ENCODE measurements at regions of chr15 and their contacts with region 1.

Region 1: GRCh38 chr15:84658080-84658787 is at the start of gene NMB:
- DNase-seq: peak; percentile 78 to 83 (median 82)
- H3K4me3 ChIP-seq: peak within 1 kb of the TSS; percentile 33 to 75 (median 41)
- H3K4me3 Mint-ChIP-seq: peak within 1 kb of the TSS; percentile 83 to 87
- H3K27ac ChIP-seq: no peak within 1 kb of the TSS
- H3K27ac Mint-ChIP-seq: peak within 1 kb of the TSS in 2 of 7 donors; percentile 31 to 76
- H3K4me1 ChIP-seq: peaks cover 28 to 32% of the 10 kb centered on the region in 2 donors
- H3K4me1 Mint-ChIP-seq: peaks cover 37% of the 10 kb centered on the region
- H3K27me3 ChIP-seq: no peaks in the 10 kb centered on the region
- H3K27me3 Mint-ChIP-seq: peaks cover 0 to 8% (median 8%) of the 10 kb centered on the region in 3 donors
- CTCF ChIP-seq: peak; percentile 74
- polyA plus RNA-seq, gene NMB: 0.45 to 0.81 (median 0.56) TPM

Region 2: DNA sequence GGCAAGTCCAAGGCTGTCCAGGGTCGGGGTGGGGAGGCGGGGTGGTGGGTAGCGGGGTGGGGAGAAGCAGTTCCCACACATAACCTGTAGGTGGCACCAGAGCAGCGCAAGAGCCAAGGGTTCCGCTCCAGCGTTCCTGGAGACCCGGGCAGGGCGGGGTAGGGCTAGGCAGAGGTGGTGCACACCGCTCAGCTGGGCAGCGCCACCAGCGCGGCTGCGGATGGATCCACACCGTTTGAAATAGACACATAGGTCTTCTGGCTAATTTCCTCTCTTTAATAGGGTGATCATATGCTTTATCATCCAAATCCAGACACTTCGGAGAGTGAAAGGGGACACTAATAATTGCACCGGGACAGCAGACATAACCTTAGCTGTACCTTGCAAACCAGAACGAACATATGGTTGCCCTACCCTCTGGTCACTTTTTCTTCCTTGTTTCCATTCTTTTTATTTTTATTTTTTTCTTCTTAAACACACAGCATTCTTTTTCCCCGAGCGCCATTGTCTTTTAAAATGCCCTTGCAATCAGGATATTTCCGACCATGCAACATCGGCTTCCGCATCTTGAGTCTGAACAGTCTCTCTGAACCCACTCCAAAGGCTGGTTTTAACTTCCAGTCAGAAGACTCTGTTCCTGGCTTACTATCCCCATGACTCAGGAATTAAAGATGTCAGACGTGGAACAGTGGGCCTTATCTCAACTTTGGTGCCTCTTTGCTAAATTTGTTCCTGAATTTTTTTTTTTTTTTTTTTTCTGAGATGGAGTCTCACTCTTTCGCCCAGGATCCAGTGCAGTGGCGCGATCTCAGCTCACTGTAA is 70.0 kb before region 1 on chr15:
- intact Hi-C with region 1: loop called in 1 of 2 experiments (anchors 5 kb)
- DNase-seq: peak; percentile 79 to 84 (median 81)
- H3K4me3 ChIP-seq: peak overlapping the region in 2 of 3 experiments; percentile 23 to 66
- H3K4me3 Mint-ChIP-seq: peak overlapping the region; percentile 77 to 92
- H3K27ac ChIP-seq: no peak overlapping the region
- H3K27ac Mint-ChIP-seq: peak overlapping the region in 1 of 7 donors; percentile 41
- H3K4me1 ChIP-seq: peaks cover 6 to 8% of the 10 kb centered on the region in 2 donors
- H3K4me1 Mint-ChIP-seq: peaks cover 6% of the 10 kb centered on the region
- H3K27me3 ChIP-seq: no peaks in the 10 kb centered on the region
- H3K27me3 Mint-ChIP-seq: peaks cover 0 to 3% (median 2%) of the 10 kb centered on the region in 3 donors
- CTCF ChIP-seq: peak; percentile 82

Region 3: DNA sequence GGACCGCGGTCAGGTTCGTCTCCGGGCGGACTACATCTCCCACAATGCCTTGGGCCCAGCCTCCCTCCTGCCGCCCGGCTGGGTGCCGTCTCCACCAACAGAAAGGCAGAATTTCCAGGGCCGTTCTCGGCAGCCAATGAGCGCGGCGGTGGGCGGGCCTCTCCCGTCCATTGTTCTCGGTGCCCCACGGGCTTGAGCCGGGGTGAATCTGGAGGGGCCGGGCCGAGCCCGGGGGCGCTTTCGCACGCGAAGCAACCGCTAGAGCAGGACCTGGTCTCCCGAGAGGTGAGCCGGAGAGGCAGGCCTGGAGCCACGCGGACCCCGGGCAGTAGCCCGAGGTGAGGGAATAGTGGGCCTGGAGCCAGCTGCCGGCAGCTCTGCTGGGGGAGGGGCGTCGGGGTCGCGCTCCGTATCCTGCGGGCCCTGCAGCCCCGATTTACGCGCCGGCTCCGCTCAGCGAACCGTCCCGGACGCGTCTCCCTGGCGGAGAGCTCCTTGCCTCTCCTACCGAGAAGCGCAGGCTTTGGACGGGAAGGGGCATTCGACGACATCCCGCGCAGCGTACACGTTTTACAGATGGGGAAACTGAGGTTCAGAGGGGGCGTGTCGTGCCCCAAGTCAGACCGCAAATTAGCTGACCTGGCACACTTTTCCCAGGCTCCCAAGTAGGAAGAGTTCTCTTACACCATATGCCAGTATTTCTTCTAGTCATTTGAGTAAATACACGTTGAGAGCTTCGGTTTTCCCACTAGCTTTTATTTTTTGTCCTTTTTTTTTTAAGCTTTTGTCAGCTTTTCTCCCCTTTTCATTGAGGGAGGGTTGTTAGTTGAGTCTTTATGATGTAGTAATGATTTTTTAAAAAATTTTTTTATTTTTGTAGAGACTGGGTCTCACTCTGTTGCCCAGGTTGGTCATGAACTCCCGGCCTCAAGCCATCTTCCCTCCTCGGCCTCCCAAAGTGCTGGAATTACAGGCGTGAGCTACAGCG is 57.1 kb before region 1 on chr15 and contains the start of gene ZSCAN2:
- intact Hi-C with region 1: loop called in 1 of 2 experiments (anchors 2 kb)
- DNase-seq: peak; percentile 82 to 90 (median 87)
- H3K4me3 ChIP-seq: peak within 1 kb of the TSS; percentile 78 to 95 (median 88)
- H3K4me3 Mint-ChIP-seq: peak within 1 kb of the TSS; percentile 95 to 98
- H3K27ac ChIP-seq: peak within 1 kb of the TSS; percentile 11 to 74
- H3K27ac Mint-ChIP-seq: peak within 1 kb of the TSS; percentile 69 to 95 (median 80)
- H3K4me1 ChIP-seq: peaks cover 42 to 55% of the 10 kb centered on the region in 2 donors
- H3K4me1 Mint-ChIP-seq: peaks cover 65% of the 10 kb centered on the region
- H3K27me3 ChIP-seq: no peaks in the 10 kb centered on the region
- H3K27me3 Mint-ChIP-seq: no peaks in the 10 kb centered on the region
- CTCF ChIP-seq: no peak
- polyA plus RNA-seq, gene ZSCAN2: 1.7 to 6.1 (median 3.4) TPM

Region 4: GRCh38 chr15:84631706-84632272 is 26.4 kb before region 1 on chr15:
- intact Hi-C with region 1: loop called in 1 of 2 experiments (anchors 2 kb)
- DNase-seq: no peak
- H3K4me3 ChIP-seq: peak overlapping the region; percentile 51 to 92 (median 84)
- H3K4me3 Mint-ChIP-seq: peak overlapping the region; percentile 93 to 99
- H3K27ac ChIP-seq: peak overlapping the region; percentile 33 to 83
- H3K27ac Mint-ChIP-seq: peak overlapping the region in 6 of 7 donors; percentile 88 to 98 (median 93)
- H3K4me1 ChIP-seq: peaks cover 30 to 48% of the 10 kb centered on the region in 2 donors
- H3K4me1 Mint-ChIP-seq: peaks cover 40% of the 10 kb centered on the region
- H3K27me3 ChIP-seq: no peaks in the 10 kb centered on the region
- H3K27me3 Mint-ChIP-seq: no peaks in the 10 kb centered on the region
- CTCF ChIP-seq: no peak

Region 5: DNA sequence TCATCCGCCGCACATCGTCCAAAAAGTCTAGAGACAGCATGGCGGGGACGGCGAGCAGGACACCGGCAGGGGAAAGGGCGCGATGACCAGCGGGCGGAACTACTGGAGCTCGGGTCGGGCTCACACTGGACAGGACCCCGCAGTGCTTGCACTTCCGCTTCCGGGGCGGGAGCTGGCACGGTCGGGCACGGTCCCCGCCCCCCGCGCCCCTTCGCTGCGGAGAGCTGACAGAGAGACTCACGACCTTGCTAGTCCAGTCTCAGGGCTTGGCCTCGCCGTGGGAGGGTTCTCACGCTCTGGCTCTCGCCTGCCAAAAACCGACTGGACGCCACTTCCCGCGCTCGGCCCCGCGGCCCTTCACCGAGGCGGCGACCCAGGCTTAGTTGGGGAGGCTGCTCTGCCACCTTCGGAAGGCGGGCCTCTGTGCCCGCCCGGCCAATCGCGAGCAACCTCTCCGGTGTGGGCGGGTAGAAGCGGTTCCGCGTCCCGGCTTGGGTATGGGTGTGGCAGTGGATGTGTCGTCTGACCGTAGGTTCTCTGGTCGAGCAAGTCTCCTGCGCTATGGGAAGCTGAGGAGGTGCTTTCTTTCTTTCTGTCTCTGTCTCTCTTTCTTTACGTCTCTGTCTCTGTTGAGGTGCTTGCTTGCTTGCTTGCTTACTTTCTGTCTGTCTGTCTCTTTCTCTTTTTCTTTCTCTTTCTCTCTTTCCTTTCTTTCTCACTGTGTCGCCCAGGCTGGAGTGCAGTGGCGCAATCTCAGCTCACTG is 58.0 kb after region 1 on chr15 and contains the start of gene SEC11A:
- intact Hi-C with region 1: loop called in 1 of 2 experiments (anchors 10 kb)
- DNase-seq: peak; percentile 92 to 96 (median 93)
- H3K4me3 ChIP-seq: peak within 1 kb of the TSS; percentile 73 to 100 (median 99)
- H3K4me3 Mint-ChIP-seq: peak within 1 kb of the TSS; percentile 98 to 100
- H3K27ac ChIP-seq: peak within 1 kb of the TSS; percentile 93
- H3K27ac Mint-ChIP-seq: peak within 1 kb of the TSS; percentile 86 to 100 (median 99)
- H3K4me1 ChIP-seq: peaks cover 49 to 64% of the 10 kb centered on the region in 2 donors
- H3K4me1 Mint-ChIP-seq: peaks cover 54% of the 10 kb centered on the region
- H3K27me3 ChIP-seq: no peaks in the 10 kb centered on the region
- H3K27me3 Mint-ChIP-seq: peaks cover 0 to 2% (median 0%) of the 10 kb centered on the region in 3 donors
- CTCF ChIP-seq: no peak
- polyA plus RNA-seq, gene SEC11A: 111 to 166 (median 154) TPM

Region 6: DNA sequence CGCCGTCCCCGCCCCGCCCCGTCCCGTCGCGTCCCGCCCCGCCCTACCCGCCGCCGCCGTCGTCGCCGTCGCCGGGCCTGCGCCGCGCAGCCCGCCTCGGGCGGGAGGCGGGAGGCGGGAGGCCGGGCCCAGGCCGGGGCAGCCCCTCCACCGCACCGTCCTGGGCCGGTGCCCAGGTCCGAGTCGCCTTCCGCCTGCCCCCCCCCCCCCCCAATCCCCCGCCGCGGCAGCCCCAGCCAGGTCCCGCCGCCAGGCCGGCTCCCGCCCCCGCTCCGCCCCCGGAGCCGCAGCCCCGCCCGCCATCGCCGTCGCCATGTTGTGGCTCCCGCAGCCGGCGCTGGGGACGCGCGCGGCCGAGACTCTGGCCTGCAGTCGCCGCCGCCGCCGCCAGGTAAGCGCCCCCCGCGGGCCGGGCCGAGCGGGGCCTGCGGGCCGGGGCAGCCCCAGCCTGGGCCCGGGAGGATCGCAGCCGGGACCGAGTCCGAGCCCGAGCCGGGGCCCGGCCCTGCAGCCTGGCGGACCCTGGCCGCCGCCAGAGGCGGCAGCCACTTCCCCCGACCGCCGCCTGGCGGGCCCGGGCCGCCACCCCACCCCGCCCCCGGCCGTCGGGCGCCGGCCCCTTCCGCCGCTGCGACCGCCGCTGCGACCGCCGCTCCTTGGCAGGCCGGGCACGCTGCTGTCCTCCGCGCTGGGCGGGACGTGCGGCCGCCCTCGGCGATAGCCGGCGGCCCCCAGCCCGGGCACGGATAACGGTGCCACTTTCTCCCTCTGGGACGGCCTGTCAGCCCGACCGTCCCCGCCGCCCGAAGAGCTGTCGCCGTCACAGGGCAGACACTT is 90.3 kb after region 1 on chr15 and contains the start of gene ZNF592:
- intact Hi-C with region 1: loop called in 1 of 2 experiments (anchors 5 kb)
- DNase-seq: peak; percentile 59 to 67 (median 63)
- H3K4me3 ChIP-seq: peak within 1 kb of the TSS; percentile 72 to 100 (median 96)
- H3K4me3 Mint-ChIP-seq: peak within 1 kb of the TSS; percentile 97 to 99
- H3K27ac ChIP-seq: peak within 1 kb of the TSS; percentile 95 to 97
- H3K27ac Mint-ChIP-seq: peak within 1 kb of the TSS; percentile 98 to 100 (median 99)
- H3K4me1 ChIP-seq: peaks cover 47 to 59% of the 10 kb centered on the region in 2 donors
- H3K4me1 Mint-ChIP-seq: peaks cover 66% of the 10 kb centered on the region
- H3K27me3 ChIP-seq: no peaks in the 10 kb centered on the region
- H3K27me3 Mint-ChIP-seq: no peaks in the 10 kb centered on the region
- CTCF ChIP-seq: peak; percentile 7
- polyA plus RNA-seq, gene ZNF592: 2.8 to 43.6 (median 5.0) TPM

Region 7: GRCh38 chr15:84773716-84774115 is 115.5 kb after region 1 on chr15:
- intact Hi-C with region 1: loop called in 1 of 2 experiments (anchors 5 kb)
- DNase-seq: peak; percentile 33 to 38 (median 38)
- H3K4me3 ChIP-seq: no peak overlapping the region
- H3K4me3 Mint-ChIP-seq: no peak overlapping the region
- H3K27ac ChIP-seq: peak overlapping the region in 1 of 2 donors; percentile 61
- H3K27ac Mint-ChIP-seq: peak overlapping the region; percentile 75 to 89 (median 87)
- H3K4me1 ChIP-seq: peaks cover 38 to 40% of the 10 kb centered on the region in 2 donors
- H3K4me1 Mint-ChIP-seq: peaks cover 48% of the 10 kb centered on the region
- H3K27me3 ChIP-seq: no peaks in the 10 kb centered on the region
- H3K27me3 Mint-ChIP-seq: peaks cover 0 to 2% (median 0%) of the 10 kb centered on the region in 3 donors
- CTCF ChIP-seq: no peak

Measured in CD14-positive monocyte (primary cell).